ENCODE measurements at regions of chr17 and their contacts with region 1.

Region 1: GRCh38 chr17:75380315-75380714 is 25.2 kb downstream of the GRB2 start:
- DNase-seq: no peak
- ATAC-seq: no peak
- H3K4me3 Mint-ChIP-seq: no peak overlapping the region
- H3K27ac Mint-ChIP-seq: no peak overlapping the region
- H3K4me1 Mint-ChIP-seq: peaks cover 84% of the 10 kb centered on the region
- H3K27me3 Mint-ChIP-seq: no peaks in the 10 kb centered on the region
- CTCF ChIP-seq: no peak

Region 2: DNA sequence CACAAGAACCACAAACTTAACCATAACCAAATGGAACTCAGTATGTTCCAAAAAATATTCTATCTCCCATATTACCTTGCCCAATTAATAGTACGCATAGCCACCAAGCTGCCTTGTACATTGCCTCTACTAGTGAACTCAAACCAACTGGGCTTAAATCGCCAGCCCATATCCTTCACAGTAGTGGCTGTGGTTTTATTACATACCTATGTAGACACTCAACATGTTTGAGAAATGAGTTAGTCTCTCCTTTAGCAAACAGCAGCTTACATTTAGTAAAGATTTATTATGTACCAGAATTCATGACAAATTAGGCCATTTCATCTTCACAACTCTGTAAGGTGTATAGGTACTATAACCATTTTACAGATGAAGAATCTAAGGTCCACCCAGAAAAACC is 16.2 kb before region 1 on chr17:
- CTCF ChIA-PET with region 1: interaction called, 4 read pairs
- POLR2A ChIA-PET with region 1: interaction called, 9 read pairs
- intact Hi-C with region 1: loop called (anchors 2 kb)
- DNase-seq: no peak
- ATAC-seq: no peak
- H3K4me3 Mint-ChIP-seq: peak overlapping the region; percentile 33
- H3K27ac Mint-ChIP-seq: peak overlapping the region; percentile 50
- H3K4me1 Mint-ChIP-seq: peaks cover 96% of the 10 kb centered on the region
- H3K27me3 Mint-ChIP-seq: no peaks in the 10 kb centered on the region
- CTCF ChIP-seq: no peak

Region 3: DNA sequence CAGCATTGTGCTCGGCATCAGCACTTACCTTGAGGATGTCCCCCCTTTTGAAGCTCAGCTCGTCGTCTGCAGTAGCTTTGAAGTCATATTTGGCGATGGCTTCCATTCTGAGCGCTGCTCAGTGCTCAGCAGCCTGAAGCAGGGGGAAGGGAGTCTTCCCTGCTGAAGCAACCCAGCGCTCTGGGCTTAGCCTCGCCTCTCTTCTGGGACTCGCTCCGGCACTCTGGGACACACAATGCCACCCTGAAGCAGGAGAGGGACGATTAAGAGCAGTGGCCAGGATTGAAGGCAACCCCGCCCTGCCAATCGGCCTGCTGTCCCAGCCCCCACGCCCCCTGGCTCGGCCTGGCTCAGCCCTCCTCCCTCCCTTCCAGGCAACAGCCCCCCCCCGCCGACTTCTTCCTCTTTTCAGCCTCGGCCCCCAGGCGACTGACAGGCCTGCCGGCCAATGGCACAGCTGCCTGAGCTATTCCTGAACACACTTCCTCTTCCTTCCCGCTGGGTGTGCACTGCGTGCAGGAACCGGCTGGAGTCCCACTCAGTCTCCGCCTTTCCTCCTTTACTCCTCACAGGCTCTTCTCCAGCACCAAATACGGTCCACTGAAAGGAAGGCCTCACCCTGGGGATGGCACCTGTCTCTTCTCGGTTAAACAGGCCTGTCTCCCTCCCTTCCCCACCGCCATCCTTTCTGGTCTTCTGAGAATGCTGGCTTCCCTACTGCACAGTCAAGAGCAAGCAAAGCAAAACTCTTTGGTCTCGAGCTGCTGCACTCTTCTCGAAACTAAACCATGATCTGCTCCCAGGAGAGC is 13.4 kb after region 1 on chr17:
- CTCF ChIA-PET with region 1: interaction called, 5 read pairs
- POLR2A ChIA-PET with region 1: interaction called, 7 read pairs
- intact Hi-C with region 1: loop called (anchors 1 kb)
- DNase-seq: peak; percentile 84
- ATAC-seq: peak; percentile 96
- H3K4me3 Mint-ChIP-seq: peak overlapping the region; percentile 92
- H3K27ac Mint-ChIP-seq: peak overlapping the region; percentile 88
- H3K4me1 Mint-ChIP-seq: peaks cover 84% of the 10 kb centered on the region
- H3K27me3 Mint-ChIP-seq: no peaks in the 10 kb centered on the region
- CTCF ChIP-seq: no peak